A673 (cell line): ENCODE measurements at regions of chr16 and their contacts with region 1.

Region 1: GRCh38 chr16:25224731-25225319 is 8.1 kb downstream of the AQP8 start:
- DNase-seq: no peak
- H3K4me3 ChIP-seq: no peak overlapping the region
- H3K27ac ChIP-seq: no peak overlapping the region
- H3K4me1 ChIP-seq: no peaks in the 10 kb centered on the region
- H3K27me3 ChIP-seq: no peaks in the 10 kb centered on the region
- CTCF ChIP-seq: no peak

Region 2: DNA sequence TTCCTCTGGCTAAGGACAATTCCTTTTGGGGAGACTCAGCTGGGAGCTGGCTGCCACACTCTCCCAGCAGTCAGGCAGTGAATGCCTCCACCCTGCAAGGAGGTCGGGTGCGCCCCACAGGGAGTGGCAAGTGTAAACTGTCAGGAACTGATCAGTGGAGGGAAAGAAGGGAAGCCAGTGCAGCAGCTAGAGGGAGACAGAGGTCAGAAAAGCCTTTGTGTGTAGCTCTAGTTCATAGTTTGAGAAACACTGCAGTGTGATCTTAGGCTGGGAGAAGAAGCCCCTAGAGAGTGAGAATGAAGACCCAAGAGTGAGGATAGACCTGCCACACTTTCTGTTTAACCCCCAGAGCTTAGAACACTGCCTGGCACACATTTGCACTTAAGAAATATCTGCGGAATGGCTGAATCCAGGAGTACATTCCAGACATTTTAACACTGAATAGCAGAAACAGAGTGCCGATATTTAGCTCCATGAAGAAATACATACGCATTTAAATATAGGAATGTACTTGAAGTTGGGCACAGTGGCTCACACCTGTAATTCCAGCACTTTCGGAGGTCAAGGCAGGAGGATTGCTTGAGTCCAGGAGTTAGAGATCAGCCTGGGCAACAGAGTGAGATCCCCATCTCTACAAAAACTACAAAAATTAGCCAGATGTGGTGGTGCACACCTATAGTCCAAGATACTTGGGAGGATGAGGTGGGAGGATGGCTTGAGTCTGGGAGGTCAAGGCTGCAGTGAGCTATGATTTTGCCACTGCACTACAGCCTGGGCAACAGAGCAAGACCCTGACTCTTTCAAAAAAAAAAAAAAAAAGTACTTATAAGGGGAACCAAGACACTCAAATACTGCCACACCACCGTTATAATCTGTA is 390.1 kb before region 1 on chr16:
- CTCF ChIA-PET with region 1: interaction called, 10 read pairs
- POLR2A ChIA-PET with region 1: no interaction called
- intact Hi-C with region 1: loop called (anchors 10 kb)
- DNase-seq: peak; percentile 54
- H3K4me3 ChIP-seq: no peak overlapping the region
- H3K27ac ChIP-seq: no peak overlapping the region
- H3K4me1 ChIP-seq: no peaks in the 10 kb centered on the region
- H3K27me3 ChIP-seq: no peaks in the 10 kb centered on the region
- CTCF ChIP-seq: peak; percentile 66

Region 3: GRCh38 chr16:25126820-25127232 is 98.0 kb before region 1 on chr16:
- CTCF ChIA-PET with region 1: interaction called, 6 read pairs
- POLR2A ChIA-PET with region 1: no interaction called
- intact Hi-C with region 1: loop called (anchors 2 kb)
- DNase-seq: peak; percentile 58
- H3K4me3 ChIP-seq: no peak overlapping the region
- H3K27ac ChIP-seq: no peak overlapping the region
- H3K4me1 ChIP-seq: no peaks in the 10 kb centered on the region
- H3K27me3 ChIP-seq: no peaks in the 10 kb centered on the region
- CTCF ChIP-seq: peak; percentile 68

Region 4: GRCh38 chr16:25449802-25450201 is 225.0 kb after region 1 on chr16:
- CTCF ChIA-PET with region 1: no interaction called
- POLR2A ChIA-PET with region 1: no interaction called
- intact Hi-C with region 1: no loop called
- DNase-seq: no peak
- H3K4me3 ChIP-seq: no peak overlapping the region
- H3K27ac ChIP-seq: no peak overlapping the region
- H3K4me1 ChIP-seq: no peaks in the 10 kb centered on the region
- H3K27me3 ChIP-seq: no peaks in the 10 kb centered on the region
- CTCF ChIP-seq: no peak